ENCODE measurements at regions of chr2 and their contacts with region 1.

Region 1: GRCh38 chr2:234690569-234691213 is 193.8 kb upstream of the ARL4C start:
- DNase-seq: peak; percentile 67
- ATAC-seq: peak; percentile 88
- H3K4me3 ChIP-seq: peak overlapping the region; percentile 21; the same call in 1 of the 2 replicates
- H3K27ac ChIP-seq: peak overlapping the region; percentile 58
- H3K4me1 ChIP-seq: peaks cover 34% of the 10 kb centered on the region
- H3K27me3 ChIP-seq: no peaks in the 10 kb centered on the region
- CTCF ChIP-seq: no peak

Region 2: DNA sequence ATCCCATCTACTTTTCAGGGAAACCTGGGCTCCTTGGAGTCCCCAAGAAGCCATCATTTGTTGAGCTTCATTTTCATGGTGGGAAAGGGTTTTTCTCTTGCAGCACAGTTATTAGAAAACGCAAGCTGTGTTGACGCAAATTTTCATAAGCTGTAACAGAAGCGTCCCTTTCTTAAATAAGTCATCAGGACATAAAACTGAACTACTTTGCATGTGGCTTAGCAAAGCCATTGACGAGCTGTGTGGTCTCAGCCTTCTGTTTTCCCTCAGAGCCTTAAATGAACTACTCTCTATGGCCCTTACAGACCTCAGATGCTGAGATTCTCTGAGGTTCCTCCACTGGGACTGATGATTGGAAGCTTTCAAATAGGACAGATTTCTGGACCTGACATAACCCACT is 278.9 kb before region 1 on chr2:
- CTCF ChIA-PET with region 1: no interaction called
- POLR2A ChIA-PET with region 1: no interaction called
- intact Hi-C with region 1: no loop called
- DNase-seq: no peak
- ATAC-seq: no peak
- H3K4me3 ChIP-seq: no peak overlapping the region
- H3K27ac ChIP-seq: no peak overlapping the region
- H3K4me1 ChIP-seq: peaks cover 12% of the 10 kb centered on the region; the same call in 1 of the 2 replicates
- H3K27me3 ChIP-seq: no peaks in the 10 kb centered on the region
- CTCF ChIP-seq: no peak

Region 3: DNA sequence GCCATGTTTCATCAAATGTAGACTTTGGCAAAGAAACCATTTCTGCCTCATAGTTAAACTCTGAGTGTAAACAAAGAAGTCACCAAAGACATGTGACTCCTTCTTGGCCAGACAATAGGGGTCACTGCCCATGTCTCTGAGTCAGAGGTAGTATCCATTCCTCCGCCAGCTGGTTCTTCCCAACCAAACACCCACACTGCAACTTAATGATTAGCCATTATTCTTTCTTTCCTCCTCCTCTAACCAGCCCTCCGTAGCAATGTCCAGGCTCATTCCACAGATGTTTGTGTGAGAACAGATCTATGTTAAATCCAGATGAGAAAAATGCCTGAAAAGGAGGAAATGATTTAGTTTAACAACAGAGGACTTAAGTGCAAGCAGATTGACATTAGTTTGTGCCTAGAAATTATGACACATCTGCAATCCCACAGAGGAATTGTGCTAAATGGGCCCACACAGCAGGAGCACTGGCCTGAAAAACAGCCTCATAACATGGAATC is 133.2 kb after region 1 on chr2:
- CTCF ChIA-PET with region 1: no interaction called
- POLR2A ChIA-PET with region 1: no interaction called
- intact Hi-C with region 1: loop called (anchors 5 kb)
- DNase-seq: peak; percentile 92
- ATAC-seq: peak; percentile 99
- H3K4me3 ChIP-seq: peak overlapping the region; percentile 26; the same call in 1 of the 2 replicates
- H3K27ac ChIP-seq: peak overlapping the region; percentile 58
- H3K4me1 ChIP-seq: peaks cover 17% of the 10 kb centered on the region
- H3K27me3 ChIP-seq: no peaks in the 10 kb centered on the region
- CTCF ChIP-seq: no peak

Region 4: DNA sequence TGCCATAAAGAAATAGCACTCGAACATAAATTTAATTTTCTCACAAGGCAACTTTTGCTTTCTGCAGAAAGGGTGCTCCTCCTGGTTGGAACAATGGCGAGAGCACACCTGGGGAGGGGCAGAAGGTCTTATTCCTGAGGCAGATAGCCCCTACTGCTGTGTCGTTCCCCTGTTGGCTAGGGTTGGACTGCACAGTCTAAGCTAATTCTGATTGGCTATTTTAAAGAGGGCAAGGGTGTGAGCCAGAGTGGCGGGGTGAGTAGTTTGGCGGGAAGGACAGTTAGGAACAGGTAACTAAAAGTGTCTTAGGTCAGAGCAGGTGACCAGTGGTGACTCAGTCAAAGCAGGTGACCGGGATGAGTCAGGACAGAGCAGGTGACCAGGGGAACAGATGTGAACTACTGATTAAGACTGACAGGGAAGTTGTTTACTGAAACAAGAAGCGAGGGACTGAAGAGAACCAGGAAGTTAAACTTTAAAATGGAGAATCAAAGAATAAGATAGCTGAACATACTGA is 753.5 kb after region 1 on chr2:
- CTCF ChIA-PET with region 1: no interaction called
- POLR2A ChIA-PET with region 1: interaction called, 14 read pairs
- intact Hi-C with region 1: no loop called
- DNase-seq: peak; percentile 45
- ATAC-seq: no peak; the same call in 1 of the 2 replicates
- H3K4me3 ChIP-seq: no peak overlapping the region
- H3K27ac ChIP-seq: peak overlapping the region; percentile 37
- H3K4me1 ChIP-seq: no peaks in the 10 kb centered on the region
- H3K27me3 ChIP-seq: no peaks in the 10 kb centered on the region
- CTCF ChIP-seq: no peak

Measured in PC-3 (cell line).